WTC11 (cell line): ENCODE measurements at regions of chr18 and their contacts with region 1.

Region 1: DNA sequence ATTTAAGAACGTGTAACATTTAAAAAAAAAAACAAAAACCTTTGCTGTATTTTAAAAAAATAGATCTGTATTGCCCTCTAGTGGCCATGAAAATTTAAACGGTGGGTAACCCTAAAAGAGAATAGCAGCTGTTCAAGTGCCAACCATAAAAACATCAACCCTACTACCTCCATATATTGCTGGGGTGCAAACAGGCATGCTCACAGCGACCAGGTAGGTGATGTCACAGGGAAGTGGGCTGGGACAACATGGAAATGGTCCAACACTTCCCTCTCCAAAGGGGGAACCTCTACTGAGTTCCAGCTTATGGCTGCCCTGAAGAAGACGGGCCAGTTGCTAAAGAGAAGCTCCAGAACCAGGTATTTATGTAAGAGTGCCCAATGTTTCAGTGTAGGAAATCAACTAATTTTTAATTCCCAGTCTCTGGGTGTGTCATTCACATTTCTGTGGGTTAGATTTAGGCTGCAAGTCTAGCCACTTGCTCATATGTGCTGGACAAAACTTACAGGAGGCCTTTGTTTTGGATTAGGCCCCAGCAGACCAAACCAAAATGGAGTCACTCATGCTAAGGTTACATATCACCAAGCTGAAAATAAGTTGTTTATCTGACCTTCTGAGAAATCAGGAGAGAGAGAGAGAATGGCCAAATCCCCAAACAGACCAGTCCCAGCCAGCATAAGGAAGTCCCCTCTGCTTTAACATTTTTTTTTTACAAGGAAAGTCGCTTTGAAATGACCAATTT is 54.5 kb downstream of the SKA1 start:
- DNase-seq: no peak
- ATAC-seq: 0 out of 2 replicates have a peak, but pooled peaks have one; percentile 28
- H3K4me3 Mint-ChIP-seq: no peak overlapping the region
- H3K27ac Mint-ChIP-seq: no peak overlapping the region
- H3K4me1 Mint-ChIP-seq: no peaks in the 10 kb centered on the region
- H3K27me3 Mint-ChIP-seq: peaks cover 5% of the 10 kb centered on the region; the same call in 1 of the 2 replicates
- CTCF ChIP-seq: peak; percentile 18; the same call in 1 of the 2 replicates

Region 2: DNA sequence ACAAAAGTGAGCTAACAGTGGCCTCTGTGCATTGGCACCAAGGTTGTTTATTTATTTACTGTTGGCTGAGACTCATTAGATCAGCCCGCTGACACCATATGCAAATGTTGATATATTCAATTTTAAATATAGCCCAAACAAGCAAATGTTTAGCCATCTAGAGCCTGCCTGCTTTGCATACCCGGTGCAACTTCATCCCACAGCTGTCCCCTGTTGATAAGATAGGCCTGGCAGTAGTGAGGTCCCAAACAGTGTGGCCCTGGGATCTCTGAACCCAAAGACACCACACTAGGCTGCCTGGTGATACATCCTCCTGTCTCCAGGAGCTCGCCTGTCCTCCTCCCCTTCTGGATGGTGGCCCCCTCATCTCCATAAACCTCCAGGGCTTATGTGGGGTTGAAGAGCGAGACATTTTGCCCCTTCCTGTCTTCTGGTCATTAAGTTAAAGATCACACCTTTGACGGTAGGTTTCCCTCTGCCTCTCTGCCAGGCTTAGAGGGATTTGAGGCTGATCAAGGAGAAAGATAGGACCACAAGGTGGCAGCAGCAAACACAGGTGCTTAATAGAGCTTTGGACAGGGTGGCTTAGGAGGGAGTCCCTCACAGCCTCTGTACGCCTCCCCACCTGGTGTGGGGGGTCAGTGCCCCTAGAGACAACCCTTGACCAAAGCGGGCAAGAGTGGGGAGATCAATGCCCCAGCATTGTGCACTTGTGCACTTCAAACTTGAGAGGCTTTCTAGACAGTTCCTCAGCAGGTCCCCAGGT is 210.8 kb before region 1 on chr18:
- CTCF ChIA-PET with region 1: interaction called, 23 read pairs
- POLR2A ChIA-PET with region 1: no interaction called
- DNase-seq: peak; percentile 32
- ATAC-seq: peak; percentile 85
- H3K4me3 Mint-ChIP-seq: no peak overlapping the region
- H3K27ac Mint-ChIP-seq: no peak overlapping the region
- H3K4me1 Mint-ChIP-seq: peaks cover 3% of the 10 kb centered on the region; the same call in 1 of the 2 replicates
- H3K27me3 Mint-ChIP-seq: peaks cover 8% of the 10 kb centered on the region
- CTCF ChIP-seq: peak; percentile 11; the same call in 1 of the 2 replicates

Region 3: DNA sequence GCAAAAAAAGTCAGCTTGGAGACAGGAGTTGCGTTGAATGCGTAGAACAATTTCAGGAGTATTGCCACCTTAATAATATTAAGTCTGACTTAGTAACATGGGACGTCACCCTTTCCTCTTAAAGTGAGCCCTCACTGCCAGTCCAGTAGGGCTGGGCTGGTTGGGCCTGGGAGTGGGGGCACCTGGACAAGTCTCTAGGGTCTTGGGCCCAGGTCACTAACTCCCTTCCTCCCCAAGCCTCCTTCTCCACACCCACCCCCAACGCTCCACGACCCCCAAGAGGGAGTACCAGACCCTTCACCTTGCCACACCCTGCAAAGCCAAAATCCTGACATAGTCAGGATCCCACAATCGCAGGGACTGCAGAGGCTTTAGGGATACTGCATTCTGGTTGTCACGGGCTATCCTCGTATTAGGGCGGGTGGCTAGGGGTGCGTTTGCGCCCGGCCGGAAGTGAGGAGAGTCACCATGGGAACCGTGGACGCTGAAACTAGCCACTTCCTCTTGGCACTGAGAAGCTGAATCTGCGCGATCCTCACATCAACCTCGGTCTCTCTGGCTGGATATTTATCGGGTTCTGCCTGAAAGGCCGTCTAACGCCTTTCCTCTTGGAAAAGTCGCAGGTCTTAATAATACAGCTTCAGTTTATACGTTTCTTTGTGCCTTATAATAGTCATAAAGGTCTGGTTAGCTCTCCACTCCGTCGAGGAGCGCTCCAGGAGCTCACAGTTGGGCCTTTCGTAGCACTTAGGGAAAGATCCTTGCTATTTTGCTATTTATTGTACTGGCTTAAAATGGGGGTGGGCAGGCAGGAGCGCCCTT is 131.5 kb before region 1 on chr18:
- CTCF ChIA-PET with region 1: interaction called, 10 read pairs
- POLR2A ChIA-PET with region 1: no interaction called
- DNase-seq: peak; percentile 80
- ATAC-seq: peak; percentile 98
- H3K4me3 Mint-ChIP-seq: peak overlapping the region; percentile 81
- H3K27ac Mint-ChIP-seq: no peak overlapping the region
- H3K4me1 Mint-ChIP-seq: 0 out of 2 replicates have a peak, but pooled peaks cover 6% of the 10 kb centered on the region
- H3K27me3 Mint-ChIP-seq: peaks cover 72% of the 10 kb centered on the region
- CTCF ChIP-seq: no peak

Region 4: GRCh38 chr18:50401888-50402287 is 27.5 kb before region 1 on chr18:
- CTCF ChIA-PET with region 1: interaction called, 16 read pairs
- POLR2A ChIA-PET with region 1: no interaction called
- DNase-seq: peak; percentile 77
- ATAC-seq: peak; percentile 84
- H3K4me3 Mint-ChIP-seq: peak overlapping the region; percentile 52; the same call in 1 of the 2 replicates
- H3K27ac Mint-ChIP-seq: no peak overlapping the region
- H3K4me1 Mint-ChIP-seq: peaks cover 95% of the 10 kb centered on the region
- H3K27me3 Mint-ChIP-seq: peaks cover 67% of the 10 kb centered on the region
- CTCF ChIP-seq: no peak

Region 5: DNA sequence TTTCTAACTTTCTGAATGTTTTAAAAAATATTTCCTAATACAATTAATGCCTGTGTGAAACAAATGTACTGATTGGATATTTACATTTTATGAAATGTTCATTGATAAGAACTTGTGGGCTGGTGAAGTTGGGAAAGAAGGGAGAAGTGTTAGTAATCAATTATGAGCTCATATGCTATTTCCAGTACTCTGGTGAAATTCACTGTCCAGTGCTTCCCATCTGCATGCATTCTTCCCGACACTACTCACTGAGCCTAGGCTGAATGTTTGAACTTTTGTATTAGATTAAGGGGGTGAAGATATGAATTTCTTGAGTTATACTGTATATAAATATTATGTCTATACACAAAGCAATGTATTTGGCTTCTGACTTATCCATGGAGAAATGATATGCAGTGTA is 18.5 kb before region 1 on chr18:
- CTCF ChIA-PET with region 1: interaction called, 10 read pairs
- POLR2A ChIA-PET with region 1: no interaction called
- DNase-seq: no peak
- ATAC-seq: no peak
- H3K4me3 Mint-ChIP-seq: no peak overlapping the region
- H3K27ac Mint-ChIP-seq: no peak overlapping the region
- H3K4me1 Mint-ChIP-seq: peaks cover 35% of the 10 kb centered on the region
- H3K27me3 Mint-ChIP-seq: peaks cover 31% of the 10 kb centered on the region
- CTCF ChIP-seq: no peak

Region 6: GRCh38 chr18:50806208-50806616 is 376.8 kb after region 1 on chr18:
- CTCF ChIA-PET with region 1: no interaction called
- POLR2A ChIA-PET with region 1: no interaction called
- DNase-seq: no peak
- ATAC-seq: peak; percentile 67
- H3K4me3 Mint-ChIP-seq: no peak overlapping the region
- H3K27ac Mint-ChIP-seq: no peak overlapping the region
- H3K4me1 Mint-ChIP-seq: peaks cover 29% of the 10 kb centered on the region
- H3K27me3 Mint-ChIP-seq: no peaks in the 10 kb centered on the region
- CTCF ChIP-seq: no peak